Caco-2 (cell line): ENCODE measurements at regions of chr9 and their contacts with region 1.

Region 1: GRCh38 chr9:114155263-114155972 is at the start of gene COL27A1:
- DNase-seq: peak; percentile 82 to 93
- H3K4me3 ChIP-seq: peak within 1 kb of the TSS; percentile 81
- H3K4me3 Mint-ChIP-seq: peak within 1 kb of the TSS; percentile 78
- H3K27ac Mint-ChIP-seq: peak within 1 kb of the TSS; percentile 82
- H3K4me1 ChIP-seq: peaks cover 11% of the 10 kb centered on the region
- H3K4me1 Mint-ChIP-seq: peaks cover 13% of the 10 kb centered on the region
- H3K27me3 ChIP-seq: no peaks in the 10 kb centered on the region
- H3K27me3 Mint-ChIP-seq: no peaks in the 10 kb centered on the region
- CTCF ChIP-seq: peak; percentile 94 to 97
- total RNA-seq, gene COL27A1: 31.1 and 41.3 TPM in 2 replicates

Region 2: DNA sequence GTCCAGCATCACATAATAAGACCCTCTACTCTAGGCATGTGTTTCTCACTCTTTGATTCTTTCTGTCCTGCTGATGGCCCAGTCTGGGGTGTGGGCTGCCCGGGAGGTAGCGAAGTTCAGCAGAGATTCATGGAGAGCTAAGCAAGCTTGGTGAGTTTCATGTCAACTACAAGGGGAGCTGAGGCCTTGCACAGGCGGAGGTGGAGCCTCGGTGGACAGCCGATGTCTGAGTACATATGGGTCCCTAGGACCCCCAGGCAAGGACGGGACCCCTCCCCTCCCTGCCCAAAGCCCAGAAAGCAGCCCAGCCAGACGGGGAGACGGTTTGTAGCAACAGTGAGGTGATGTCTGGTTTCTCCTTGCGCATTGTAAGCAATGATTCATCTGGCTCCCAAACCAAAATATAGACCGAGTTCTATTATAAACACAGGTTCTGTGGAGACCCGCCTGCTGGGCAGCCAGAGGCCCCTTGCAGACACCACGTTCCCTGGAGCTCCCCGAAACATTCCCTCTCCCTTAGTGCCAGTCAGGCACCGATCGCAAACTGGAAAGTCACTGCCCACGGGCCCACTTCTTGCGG is 45.4 kb after region 1 on chr9:
- CTCF ChIA-PET with region 1: no interaction called
- POLR2A ChIA-PET with region 1: no interaction called
- intact Hi-C with region 1: loop called (anchors 1 kb)
- DNase-seq: no peak
- H3K4me3 ChIP-seq: no peak overlapping the region
- H3K4me3 Mint-ChIP-seq: no peak overlapping the region
- H3K27ac Mint-ChIP-seq: no peak overlapping the region
- H3K4me1 ChIP-seq: peaks cover 17% of the 10 kb centered on the region
- H3K4me1 Mint-ChIP-seq: peaks cover 25% of the 10 kb centered on the region
- H3K27me3 ChIP-seq: no peaks in the 10 kb centered on the region
- H3K27me3 Mint-ChIP-seq: no peaks in the 10 kb centered on the region
- CTCF ChIP-seq: no peak

Region 3: GRCh38 chr9:114263853-114264510 is 108.6 kb after region 1 on chr9:
- CTCF ChIA-PET with region 1: no interaction called
- POLR2A ChIA-PET with region 1: no interaction called
- intact Hi-C with region 1: loop called (anchors 1 kb)
- DNase-seq: peak in 1 of 2 experiments; percentile 46
- H3K4me3 ChIP-seq: no peak overlapping the region
- H3K4me3 Mint-ChIP-seq: no peak overlapping the region
- H3K27ac Mint-ChIP-seq: no peak overlapping the region
- H3K4me1 ChIP-seq: no peaks in the 10 kb centered on the region
- H3K4me1 Mint-ChIP-seq: no peaks in the 10 kb centered on the region
- H3K27me3 ChIP-seq: no peaks in the 10 kb centered on the region
- H3K27me3 Mint-ChIP-seq: no peaks in the 10 kb centered on the region
- CTCF ChIP-seq: peak in 1 of 2 experiments; percentile 28

Region 4: GRCh38 chr9:114308411-114308811 is 153.0 kb after region 1 on chr9:
- CTCF ChIA-PET with region 1: no interaction called
- POLR2A ChIA-PET with region 1: no interaction called
- intact Hi-C with region 1: no loop called
- DNase-seq: no peak
- H3K4me3 ChIP-seq: no peak overlapping the region
- H3K4me3 Mint-ChIP-seq: no peak overlapping the region
- H3K27ac Mint-ChIP-seq: no peak overlapping the region
- H3K4me1 ChIP-seq: no peaks in the 10 kb centered on the region
- H3K4me1 Mint-ChIP-seq: no peaks in the 10 kb centered on the region
- H3K27me3 ChIP-seq: no peaks in the 10 kb centered on the region
- H3K27me3 Mint-ChIP-seq: no peaks in the 10 kb centered on the region
- CTCF ChIP-seq: no peak

Region 5: GRCh38 chr9:114434878-114435311 is 279.5 kb after region 1 on chr9:
- CTCF ChIA-PET with region 1: no interaction called
- POLR2A ChIA-PET with region 1: no interaction called
- intact Hi-C with region 1: no loop called
- DNase-seq: peak; percentile 41 to 64
- H3K4me3 ChIP-seq: no peak overlapping the region
- H3K4me3 Mint-ChIP-seq: no peak overlapping the region
- H3K27ac Mint-ChIP-seq: no peak overlapping the region
- H3K4me1 ChIP-seq: no peaks in the 10 kb centered on the region
- H3K4me1 Mint-ChIP-seq: no peaks in the 10 kb centered on the region
- H3K27me3 ChIP-seq: no peaks in the 10 kb centered on the region
- H3K27me3 Mint-ChIP-seq: peaks cover 6% of the 10 kb centered on the region
- CTCF ChIP-seq: peak; percentile 68 to 70